ENCODE measurements at regions of chr9 and their contacts with region 1.

Region 1: DNA sequence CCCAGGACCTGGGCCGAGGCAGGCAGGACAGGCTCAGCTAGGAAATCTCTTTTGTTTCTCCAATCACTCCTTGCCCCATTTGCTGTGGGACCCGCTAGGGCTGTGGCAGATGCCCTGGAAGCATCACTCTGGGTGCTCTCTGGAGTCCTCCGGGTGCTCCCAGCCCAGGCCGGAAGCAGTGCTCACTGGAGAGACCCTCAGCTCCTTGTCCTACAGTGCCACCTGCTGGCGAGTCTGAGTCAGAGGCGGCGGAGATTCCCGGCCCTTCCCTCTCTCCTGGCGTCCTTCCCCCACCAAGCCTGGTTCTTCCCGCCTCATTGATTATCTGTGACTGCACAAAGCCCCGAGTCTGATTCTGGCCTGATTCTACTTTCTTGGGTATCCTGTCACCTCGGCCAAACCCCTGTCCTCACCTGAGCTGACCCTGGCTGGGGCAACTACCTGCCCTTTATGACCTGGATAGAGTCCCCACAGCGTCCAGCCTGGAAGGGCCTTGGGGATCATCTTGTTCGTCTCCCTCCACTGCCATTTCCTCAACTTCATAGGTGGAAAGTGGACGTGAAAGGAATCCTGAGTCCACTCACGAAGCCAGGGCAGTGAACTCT is 7.3 kb upstream of the BARHL1 start:
- DNase-seq: peak; percentile 49 to 71
- ATAC-seq: peak; percentile 62 to 93 (median 85)
- H3K4me3 ChIP-seq: no peak overlapping the region
- H3K4me3 Mint-ChIP-seq: no peak overlapping the region
- H3K27ac ChIP-seq: no peak overlapping the region
- H3K27ac Mint-ChIP-seq: no peak overlapping the region
- H3K4me1 ChIP-seq: no peaks in the 10 kb centered on the region
- H3K4me1 Mint-ChIP-seq: peaks cover 0 to 5% of the 10 kb centered on the region in 2 donors
- H3K27me3 ChIP-seq: peaks cover 47% of the 10 kb centered on the region
- H3K27me3 Mint-ChIP-seq: peaks cover 51 to 72% of the 10 kb centered on the region in 2 donors
- CTCF ChIP-seq: peak; percentile 70

Region 2: DNA sequence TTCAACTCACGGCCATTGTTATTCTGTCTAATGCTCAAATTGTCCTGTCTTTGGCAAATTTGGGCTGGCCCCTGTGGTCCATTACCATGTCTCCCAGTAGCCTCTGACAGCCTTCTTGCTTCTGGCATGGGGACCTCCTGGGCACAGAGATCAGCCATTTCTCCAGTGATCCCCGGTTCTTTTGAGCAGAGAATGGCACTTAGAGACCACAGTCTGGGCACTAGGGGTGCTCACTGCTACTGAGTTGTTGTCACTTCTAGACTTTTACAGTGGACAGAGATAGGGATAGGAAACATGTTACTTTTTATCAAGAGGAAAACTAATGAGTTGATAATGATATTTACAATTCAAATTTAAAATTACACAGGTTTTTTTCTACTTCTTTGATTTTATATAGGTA is 40.3 kb before region 1 on chr9:
- intact Hi-C with region 1: loop called (anchors 1 kb)
- DNase-seq: no peak
- ATAC-seq: no peak
- H3K4me3 ChIP-seq: no peak overlapping the region
- H3K4me3 Mint-ChIP-seq: no peak overlapping the region
- H3K27ac ChIP-seq: no peak overlapping the region
- H3K27ac Mint-ChIP-seq: no peak overlapping the region
- H3K4me1 ChIP-seq: peaks cover 4% of the 10 kb centered on the region
- H3K4me1 Mint-ChIP-seq: no peaks in the 10 kb centered on the region
- H3K27me3 ChIP-seq: peaks cover 4% of the 10 kb centered on the region
- H3K27me3 Mint-ChIP-seq: peaks cover 20 to 21% of the 10 kb centered on the region in 2 donors
- CTCF ChIP-seq: no peak

Region 3: GRCh38 chr9:132609829-132610228 is 34.7 kb after region 1 on chr9:
- intact Hi-C with region 1: no loop called
- DNase-seq: no peak
- ATAC-seq: no peak
- H3K4me3 ChIP-seq: no peak overlapping the region
- H3K4me3 Mint-ChIP-seq: no peak overlapping the region
- H3K27ac ChIP-seq: no peak overlapping the region
- H3K27ac Mint-ChIP-seq: no peak overlapping the region
- H3K4me1 ChIP-seq: no peaks in the 10 kb centered on the region
- H3K4me1 Mint-ChIP-seq: no peaks in the 10 kb centered on the region
- H3K27me3 ChIP-seq: no peaks in the 10 kb centered on the region
- H3K27me3 Mint-ChIP-seq: no peaks in the 10 kb centered on the region
- CTCF ChIP-seq: no peak